ENCODE measurements at regions of chr3 and their contacts with region 1.

Region 1: GRCh38 chr3:81910244-81910852 is 148.9 kb upstream of the GBE1 start:
- DNase-seq: peak; percentile 30
- ATAC-seq: peak; percentile 44
- H3K4me3 Mint-ChIP-seq: no peak overlapping the region
- H3K27ac Mint-ChIP-seq: no peak overlapping the region
- H3K4me1 Mint-ChIP-seq: no peaks in the 10 kb centered on the region
- H3K27me3 Mint-ChIP-seq: peaks cover 2% of the 10 kb centered on the region

Region 2: DNA sequence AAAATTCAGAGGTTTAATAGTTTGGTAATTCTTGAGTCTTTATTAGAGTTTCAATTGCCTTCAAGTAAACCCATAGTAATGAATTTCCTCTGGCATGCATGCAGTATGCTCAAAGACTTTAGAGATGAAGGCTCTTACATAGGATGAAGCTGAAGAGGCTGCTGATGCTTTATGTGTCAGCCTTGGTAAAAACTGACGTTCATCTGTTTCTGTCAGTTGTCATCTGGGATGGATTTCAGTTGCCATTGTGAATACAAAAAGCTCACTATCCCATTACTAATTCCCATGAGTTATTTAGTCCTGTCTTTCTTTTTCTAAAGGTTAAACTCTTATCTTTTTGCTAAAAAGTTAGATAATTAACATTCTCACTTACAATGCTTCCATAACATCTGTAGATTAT is 12.0 kb before region 1 on chr3:
- CTCF ChIA-PET with region 1: interaction called, 12 read pairs
- POLR2A ChIA-PET with region 1: no interaction called
- DNase-seq: no peak
- ATAC-seq: no peak
- H3K4me3 Mint-ChIP-seq: no peak overlapping the region
- H3K27ac Mint-ChIP-seq: no peak overlapping the region
- H3K4me1 Mint-ChIP-seq: no peaks in the 10 kb centered on the region
- H3K27me3 Mint-ChIP-seq: no peaks in the 10 kb centered on the region

Region 3: GRCh38 chr3:81920816-81921215 is 10.5 kb after region 1 on chr3:
- CTCF ChIA-PET with region 1: interaction called, 10 read pairs
- POLR2A ChIA-PET with region 1: no interaction called
- DNase-seq: no peak
- ATAC-seq: no peak
- H3K4me3 Mint-ChIP-seq: no peak overlapping the region
- H3K27ac Mint-ChIP-seq: no peak overlapping the region
- H3K4me1 Mint-ChIP-seq: no peaks in the 10 kb centered on the region
- H3K27me3 Mint-ChIP-seq: no peaks in the 10 kb centered on the region